ENCODE measurements at regions of chr10 and their contacts with region 1.

Region 1: GRCh38 chr10:71766702-71767419 is 6.5 kb downstream of the VSIR start:
- DNase-seq: peak; percentile 98
- H3K4me3 ChIP-seq: no peak overlapping the region
- H3K27me3 ChIP-seq: no peaks in the 10 kb centered on the region
- CTCF ChIP-seq: no peak

Region 2: GRCh38 chr10:71756311-71757191 is 10.3 kb before region 1 on chr10:
- CTCF ChIA-PET with region 1: interaction called, 31 read pairs
- POLR2A ChIA-PET with region 1: interaction called, 7 read pairs
- DNase-seq: peak; percentile 74
- H3K4me3 ChIP-seq: no peak overlapping the region
- H3K27me3 ChIP-seq: no peaks in the 10 kb centered on the region
- CTCF ChIP-seq: no peak